GM13976 (cell line): ENCODE measurements at regions of chr5 and their contacts with region 1.

Region 1: GRCh38 chr5:100855295-100855694 is 47.8 kb downstream of the ST8SIA4 start:
- DNase-seq: no peak
- CTCF ChIP-seq: no peak

Region 2: GRCh38 chr5:100898504-100899346 is 43.4 kb after region 1 on chr5:
- in situ Hi-C with region 1: loop called (anchors 5 kb)
- DNase-seq: no peak
- CTCF ChIP-seq: no peak